ENCODE measurements at regions of chr6 and their contacts with region 1.

Region 1: GRCh38 chr6:27132532-27133280 is 114.8 kb upstream of the PRSS16 start:
- DNase-seq: peak; percentile 95
- H3K4me3 Mint-ChIP-seq: no peak overlapping the region
- H3K27ac Mint-ChIP-seq: no peak overlapping the region
- H3K4me1 Mint-ChIP-seq: peaks cover 16% of the 10 kb centered on the region
- H3K27me3 Mint-ChIP-seq: peaks cover 2% of the 10 kb centered on the region

Region 2: GRCh38 chr6:26183581-26184366 is 948.9 kb before region 1 on chr6:
- CTCF ChIA-PET with region 1: no interaction called
- POLR2A ChIA-PET with region 1: interaction called, 11 read pairs
- intact Hi-C with region 1: no loop called
- DNase-seq: peak; percentile 80
- H3K4me3 Mint-ChIP-seq: peak overlapping the region; percentile 85
- H3K27ac Mint-ChIP-seq: peak overlapping the region; percentile 95
- H3K4me1 Mint-ChIP-seq: peaks cover 37% of the 10 kb centered on the region
- H3K27me3 Mint-ChIP-seq: peaks cover under 1% of the 10 kb centered on the region

Region 3: GRCh38 chr6:26249957-26250697 is 882.6 kb before region 1 on chr6:
- CTCF ChIA-PET with region 1: no interaction called
- POLR2A ChIA-PET with region 1: interaction called, 12 read pairs
- intact Hi-C with region 1: no loop called
- DNase-seq: peak; percentile 84
- H3K4me3 Mint-ChIP-seq: peak overlapping the region; percentile 82
- H3K27ac Mint-ChIP-seq: peak overlapping the region; percentile 99
- H3K4me1 Mint-ChIP-seq: peaks cover 22% of the 10 kb centered on the region
- H3K27me3 Mint-ChIP-seq: no peaks in the 10 kb centered on the region

Region 4: GRCh38 chr6:27146706-27147505 is 14.2 kb after region 1 on chr6:
- CTCF ChIA-PET with region 1: interaction called, 12 read pairs
- POLR2A ChIA-PET with region 1: interaction called, 375 read pairs
- intact Hi-C with region 1: loop called (anchors 1 kb)
- DNase-seq: peak; percentile 89
- H3K4me3 Mint-ChIP-seq: no peak overlapping the region
- H3K27ac Mint-ChIP-seq: no peak overlapping the region
- H3K4me1 Mint-ChIP-seq: peaks cover 21% of the 10 kb centered on the region
- H3K27me3 Mint-ChIP-seq: no peaks in the 10 kb centered on the region

Region 5: GRCh38 chr6:27809939-27810767 is 677.4 kb after region 1 on chr6:
- CTCF ChIA-PET with region 1: no interaction called
- POLR2A ChIA-PET with region 1: interaction called, 69 read pairs
- intact Hi-C with region 1: loop called (anchors 1 kb)
- DNase-seq: peak; percentile 82
- H3K4me3 Mint-ChIP-seq: peak overlapping the region; percentile 85
- H3K27ac Mint-ChIP-seq: peak overlapping the region; percentile 96
- H3K4me1 Mint-ChIP-seq: peaks cover 61% of the 10 kb centered on the region
- H3K27me3 Mint-ChIP-seq: peaks cover 4% of the 10 kb centered on the region

Measured in activated CD4-positive, alpha-beta memory T cell treated with anti-CD3 and anti-CD28 coated beads for 36 hours (primary cell).